Thyroid gland (tissue), 4 donors: ENCODE measurements at regions of chr16 and their contacts with region 1.

Region 1: DNA sequence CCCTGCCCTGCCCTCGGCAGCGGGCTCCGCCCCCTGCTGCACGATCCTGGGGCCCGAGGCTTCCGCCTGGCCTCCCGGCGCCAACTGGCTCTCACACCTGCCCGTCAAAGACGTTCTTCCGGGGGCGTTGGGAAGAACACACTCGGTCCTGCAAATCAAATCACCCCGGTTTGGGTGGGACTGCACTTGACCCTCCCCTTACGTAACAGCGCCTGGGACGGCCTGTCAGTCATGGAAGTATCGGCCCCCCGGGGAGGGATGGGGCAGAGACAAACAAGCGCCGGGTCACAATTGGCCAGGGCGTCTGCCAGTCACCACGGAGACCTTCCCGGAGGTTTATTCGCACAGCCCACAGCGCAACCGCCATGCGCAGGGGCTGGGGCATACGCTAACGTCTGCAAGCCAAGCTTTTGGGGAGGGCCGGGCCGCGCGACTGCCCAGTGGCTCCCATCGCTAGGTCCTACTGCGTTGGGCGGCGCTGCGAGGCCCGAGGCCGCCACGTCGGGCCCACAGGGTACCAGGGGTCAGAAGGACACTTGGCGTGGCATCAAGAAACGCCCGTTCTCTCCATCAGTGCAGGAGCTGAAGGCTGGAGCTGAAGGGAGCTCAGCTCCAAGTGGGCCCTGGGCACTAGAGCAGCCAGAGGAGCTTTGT is 388 bp upstream of the AKTIP start:
- DNase-seq: peak; percentile 100
- H3K4me3 ChIP-seq: peak overlapping the region; percentile 23 to 92 (median 51)
- H3K27ac ChIP-seq: peak overlapping the region; percentile 89 to 96 (median 94)
- H3K4me1 ChIP-seq: peaks cover 16 to 28% of the 10 kb centered on the region in 2 donors
- H3K27me3 ChIP-seq: no peaks in the 10 kb centered on the region
- CTCF ChIP-seq: no peak
- POLR2A ChIP-seq: peak; percentile 34 to 96

Region 2: DNA sequence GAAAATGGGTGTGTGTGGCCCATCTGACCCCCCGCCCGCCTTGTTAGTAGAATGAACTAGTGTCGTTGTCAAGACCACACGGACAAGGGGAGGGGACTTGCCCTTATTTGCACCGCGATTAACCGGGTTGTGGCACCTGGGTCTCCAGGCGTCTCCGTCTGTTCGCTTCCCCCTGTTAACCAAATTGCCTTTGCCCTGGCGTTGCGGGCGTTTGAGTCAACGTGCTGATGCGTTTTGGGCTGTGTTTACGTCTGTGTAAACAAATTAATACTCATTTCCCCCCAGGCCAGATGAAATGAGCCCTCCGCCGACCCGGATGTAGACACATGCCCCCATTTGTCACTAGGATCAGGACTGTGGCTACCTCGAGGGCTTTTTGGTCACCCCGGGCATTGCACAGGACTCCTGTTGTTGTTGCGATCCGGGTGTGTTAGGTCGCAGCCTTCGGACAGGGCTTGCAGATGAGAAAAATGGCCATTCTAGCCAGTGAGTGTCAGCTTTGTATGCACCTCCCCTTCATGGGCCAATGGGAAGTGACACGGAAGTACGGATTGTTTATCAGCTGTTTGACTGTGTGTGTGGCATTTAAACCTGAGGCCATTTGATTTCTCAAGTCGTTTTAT is 68.2 kb before region 1 on chr16:
- intact Hi-C with region 1: loop called (anchors 10 kb)
- DNase-seq: peak; percentile 80
- H3K4me3 ChIP-seq: peak overlapping the region; percentile 62 to 98 (median 71)
- H3K27ac ChIP-seq: peak overlapping the region; percentile 95 to 98 (median 98)
- H3K4me1 ChIP-seq: peaks cover 13 to 17% of the 10 kb centered on the region in 2 donors
- H3K27me3 ChIP-seq: no peaks in the 10 kb centered on the region
- CTCF ChIP-seq: no peak
- POLR2A ChIP-seq: peak in 1 of 2 donors; percentile 84